Mammary epithelial cell (primary cell): ENCODE measurements at regions of chr17 and their contacts with region 1.

Region 1: DNA sequence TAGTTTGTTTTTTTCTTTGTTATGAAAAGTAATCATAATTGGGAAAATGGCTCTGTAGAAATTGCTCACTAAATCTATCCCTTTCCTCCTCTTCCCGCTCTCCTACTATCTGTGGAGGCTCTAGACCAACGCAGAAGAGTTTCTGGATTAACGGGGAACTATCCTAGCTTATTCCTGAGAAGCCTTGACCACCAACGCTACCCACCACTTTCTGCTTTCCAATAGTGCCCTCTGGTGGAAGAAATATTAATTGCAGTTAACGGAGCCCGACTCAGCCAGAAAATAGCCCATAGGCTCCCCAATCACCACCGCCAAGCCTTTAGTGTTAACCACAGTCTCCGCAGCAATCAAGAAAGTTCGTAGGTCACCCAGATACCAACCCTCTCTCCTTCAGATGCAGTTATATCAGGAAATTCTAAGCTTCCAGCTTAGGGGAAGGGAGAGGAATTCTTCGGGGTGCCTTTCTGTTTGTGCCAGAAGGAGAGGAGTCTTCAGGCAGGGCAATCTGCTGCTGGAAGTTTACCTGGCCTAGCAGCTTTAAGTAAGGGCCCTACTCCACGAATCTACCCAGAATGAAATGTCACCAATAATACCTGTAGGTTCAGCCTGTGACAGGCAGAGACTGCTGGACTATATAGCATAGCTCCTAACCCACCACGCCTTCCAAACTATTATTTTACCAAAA is 23.0 kb upstream of the NSRP1 start:
- DNase-seq: peak; percentile 43
- H3K4me3 ChIP-seq: no peak overlapping the region
- H3K27ac ChIP-seq: no peak overlapping the region
- H3K4me1 ChIP-seq: no peaks in the 10 kb centered on the region
- H3K27me3 ChIP-seq: no peaks in the 10 kb centered on the region
- CTCF ChIP-seq: peak; percentile 62 to 70

Region 2: DNA sequence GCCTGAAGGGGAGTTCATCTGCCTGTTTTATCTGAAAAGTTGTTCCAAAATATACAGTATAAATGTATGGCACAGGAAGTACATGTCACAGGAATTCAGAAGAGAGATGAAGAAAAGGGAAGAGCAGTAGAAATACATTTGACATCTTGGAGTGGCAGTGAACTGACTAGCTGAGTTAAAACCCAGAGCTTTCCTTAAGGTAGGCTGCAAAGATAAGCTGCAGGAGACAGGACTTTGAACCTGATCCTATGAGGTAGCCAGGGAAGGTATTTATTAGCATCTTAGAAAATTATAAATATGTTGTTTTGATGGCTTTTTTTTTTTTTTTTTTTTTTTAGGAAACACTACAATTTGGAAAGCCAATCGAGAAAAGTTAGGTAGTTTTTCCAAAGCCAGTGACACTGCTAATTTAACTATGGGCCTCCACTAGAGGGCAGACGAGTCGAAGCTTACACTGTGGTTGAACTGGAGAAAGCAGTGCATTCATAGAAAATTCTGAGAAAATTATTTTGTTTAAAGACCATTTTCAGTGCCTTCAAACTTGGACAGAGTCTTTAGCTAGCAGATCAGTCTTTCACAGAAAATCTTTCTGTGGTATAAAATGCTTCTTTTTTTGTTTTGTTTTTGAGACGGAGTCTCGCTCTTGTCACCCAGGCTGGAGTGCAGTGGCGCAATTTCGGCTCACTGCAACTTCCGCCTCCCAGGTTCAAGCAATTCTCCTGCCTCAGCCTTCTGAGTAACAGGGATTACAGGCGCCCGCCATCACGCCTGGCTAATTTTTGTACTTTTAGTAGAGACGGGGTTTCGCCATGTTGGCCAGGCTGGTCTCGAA is 285.9 kb before region 1 on chr17:
- CTCF ChIA-PET with region 1: no interaction called
- dilution Hi-C with region 1: no loop called
- in situ Hi-C with region 1: loop called in 1 of 2 experiments (anchors 25 kb)
- intact Hi-C with region 1: loop called (anchors 1 kb)
- DNase-seq: peak; percentile 34
- H3K4me3 ChIP-seq: no peak overlapping the region
- H3K27ac ChIP-seq: no peak overlapping the region
- H3K4me1 ChIP-seq: peaks cover 11% of the 10 kb centered on the region
- H3K27me3 ChIP-seq: no peaks in the 10 kb centered on the region
- CTCF ChIP-seq: peak; percentile 76 to 83

Region 3: GRCh38 chr17:29867643-29868181 is 225.9 kb before region 1 on chr17:
- CTCF ChIA-PET with region 1: no interaction called
- dilution Hi-C with region 1: no loop called
- in situ Hi-C with region 1: no loop called
- intact Hi-C with region 1: loop called (anchors 2 kb)
- DNase-seq: no peak
- H3K4me3 ChIP-seq: no peak overlapping the region
- H3K27ac ChIP-seq: no peak overlapping the region
- H3K4me1 ChIP-seq: peaks cover 8% of the 10 kb centered on the region
- H3K27me3 ChIP-seq: no peaks in the 10 kb centered on the region
- CTCF ChIP-seq: peak; percentile 11 to 33

Region 4: GRCh38 chr17:30021708-30022317 is 71.8 kb before region 1 on chr17:
- CTCF ChIA-PET with region 1: interaction called, 17 read pairs
- dilution Hi-C with region 1: no loop called
- in situ Hi-C with region 1: no loop called
- intact Hi-C with region 1: loop called (anchors 1 kb)
- DNase-seq: peak; percentile 35
- H3K4me3 ChIP-seq: no peak overlapping the region
- H3K27ac ChIP-seq: no peak overlapping the region
- H3K4me1 ChIP-seq: no peaks in the 10 kb centered on the region
- H3K27me3 ChIP-seq: no peaks in the 10 kb centered on the region
- CTCF ChIP-seq: peak; percentile 80 to 90

Region 5: DNA sequence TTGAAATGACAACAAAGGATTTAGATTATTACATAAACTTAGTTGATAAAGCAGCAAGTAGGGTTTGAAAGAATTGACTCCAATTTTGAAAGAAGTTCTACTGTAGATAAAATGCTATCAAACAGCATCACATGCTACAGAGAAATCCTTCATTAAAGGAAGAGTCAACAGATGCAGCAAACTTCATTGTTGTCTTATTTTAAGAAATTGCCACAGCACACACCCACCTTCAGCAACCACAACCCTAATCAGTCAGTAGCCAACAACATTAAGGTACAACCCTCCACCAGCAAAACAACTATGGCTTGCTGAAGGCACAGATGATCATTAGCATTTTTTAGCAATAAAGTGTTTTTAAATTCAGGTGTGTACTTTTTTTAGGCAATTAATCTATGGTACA is 52.1 kb before region 1 on chr17:
- CTCF ChIA-PET with region 1: no interaction called
- dilution Hi-C with region 1: no loop called
- in situ Hi-C with region 1: loop called in 1 of 2 experiments (anchors 10 kb)
- intact Hi-C with region 1: loop called (anchors 5 kb)
- DNase-seq: no peak
- H3K4me3 ChIP-seq: no peak overlapping the region
- H3K27ac ChIP-seq: no peak overlapping the region
- H3K4me1 ChIP-seq: peaks cover 7% of the 10 kb centered on the region
- H3K27me3 ChIP-seq: peaks cover 2% of the 10 kb centered on the region
- CTCF ChIP-seq: no peak